Right cardiac atrium (tissue), 5 donors: ENCODE measurements at regions of chr9 and their contacts with region 1.

Region 1: DNA sequence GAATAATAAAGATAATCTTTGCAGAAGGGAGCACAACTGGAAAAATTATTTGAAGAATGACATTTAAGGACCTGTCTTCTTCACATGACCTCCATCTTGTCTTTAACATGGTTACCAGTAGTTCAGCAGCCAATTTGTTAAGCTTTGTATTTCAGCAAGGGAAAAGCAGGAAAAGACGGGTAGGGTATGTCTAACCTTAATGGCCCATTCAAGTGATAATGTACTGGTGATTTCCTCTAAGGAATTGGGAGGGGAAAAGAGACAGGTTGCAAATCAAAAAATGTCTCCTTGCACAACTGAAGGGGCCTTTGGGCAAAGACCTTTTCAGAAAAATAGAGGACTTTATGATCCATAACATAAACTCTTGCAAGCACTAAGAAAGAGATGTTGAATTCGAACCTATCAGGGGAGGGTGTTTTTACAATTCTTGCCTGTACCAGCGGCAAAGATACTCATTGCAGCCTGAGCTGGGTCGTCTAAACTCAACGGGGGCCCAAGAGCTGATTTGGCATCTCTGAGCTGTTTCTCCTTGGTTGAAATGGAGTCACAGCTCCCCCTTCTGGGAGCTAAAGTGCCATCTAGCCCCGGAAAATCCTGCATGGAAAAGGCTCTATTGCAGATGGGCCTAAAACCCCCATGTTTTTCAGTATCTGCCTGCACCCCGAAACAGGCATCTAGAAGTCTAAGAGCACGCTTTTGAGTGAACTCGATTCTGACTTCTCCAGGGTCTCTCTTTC is 3.8 kb downstream of the BRINP1 start:
- DNase-seq: no peak
- ATAC-seq: no peak
- H3K4me3 ChIP-seq: no peak overlapping the region
- H3K27ac ChIP-seq: no peak overlapping the region
- H3K4me1 ChIP-seq: no peaks in the 10 kb centered on the region
- H3K27me3 ChIP-seq: no peaks in the 10 kb centered on the region

Region 2: DNA sequence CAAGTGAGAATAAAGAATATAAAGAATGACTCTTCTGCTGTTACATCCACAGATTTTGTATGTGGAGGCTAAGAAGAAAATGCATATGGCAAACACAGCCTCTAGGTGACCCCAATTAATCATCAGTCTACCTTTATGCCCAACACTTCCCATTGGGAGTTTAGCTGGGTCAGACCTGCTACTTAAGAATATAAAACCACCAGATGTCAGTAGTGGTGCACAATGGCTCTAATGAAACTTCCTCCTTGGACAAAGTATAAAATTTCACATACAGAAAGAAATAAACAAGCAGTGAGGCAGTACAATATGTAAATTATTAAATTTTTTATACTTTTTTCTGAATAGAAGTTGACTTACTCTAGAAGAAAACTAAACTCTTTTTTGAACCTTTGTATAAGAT is 536.1 kb before region 1 on chr9:
- intact Hi-C with region 1: loop called in 2 of 4 experiments (anchors 2 to 5 kb)
- DNase-seq: no peak
- ATAC-seq: peak in 1 of 2 donors; percentile 33
- H3K4me3 ChIP-seq: no peak overlapping the region
- H3K27ac ChIP-seq: no peak overlapping the region
- H3K4me1 ChIP-seq: no peaks in the 10 kb centered on the region
- H3K27me3 ChIP-seq: no peaks in the 10 kb centered on the region

Region 3: DNA sequence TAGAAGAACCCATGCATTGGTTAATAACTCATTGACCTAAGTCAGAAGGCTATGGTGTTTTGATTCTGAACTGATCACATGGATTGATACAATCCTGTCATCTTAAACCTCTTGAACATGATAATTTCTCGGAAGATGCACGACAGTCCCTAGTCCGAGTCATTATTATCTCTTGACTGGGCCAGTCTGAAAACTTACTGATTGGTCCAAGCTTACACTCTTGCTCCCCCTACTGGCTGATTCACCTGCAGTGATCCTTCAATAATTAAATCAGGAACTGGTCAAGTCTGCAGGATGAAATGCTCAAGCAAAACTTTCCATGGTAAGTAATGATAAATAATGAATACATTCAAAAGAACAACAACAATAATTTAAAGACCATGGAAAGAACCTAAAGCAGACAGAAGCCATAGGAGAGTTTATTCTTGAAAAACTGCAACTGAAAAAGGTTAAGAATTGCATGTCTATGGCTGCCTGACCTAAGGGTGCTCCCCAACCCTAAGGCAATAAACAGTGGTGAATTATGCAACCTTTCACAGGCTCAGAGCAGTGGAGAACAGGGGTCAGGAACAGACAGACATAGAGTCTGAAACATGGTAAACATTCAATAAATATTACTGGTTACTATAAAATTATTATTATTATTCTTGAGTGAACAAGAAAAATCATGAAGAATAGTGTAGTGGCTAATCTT is 75.6 kb before region 1 on chr9:
- intact Hi-C with region 1: no loop called
- DNase-seq: peak in 1 of 3 donors; percentile 38
- ATAC-seq: peak; percentile 55 to 64
- H3K4me3 ChIP-seq: no peak overlapping the region
- H3K27ac ChIP-seq: no peak overlapping the region
- H3K4me1 ChIP-seq: no peaks in the 10 kb centered on the region
- H3K27me3 ChIP-seq: no peaks in the 10 kb centered on the region